ENCODE measurements at regions of chr18 and their contacts with region 1.

Region 1: DNA sequence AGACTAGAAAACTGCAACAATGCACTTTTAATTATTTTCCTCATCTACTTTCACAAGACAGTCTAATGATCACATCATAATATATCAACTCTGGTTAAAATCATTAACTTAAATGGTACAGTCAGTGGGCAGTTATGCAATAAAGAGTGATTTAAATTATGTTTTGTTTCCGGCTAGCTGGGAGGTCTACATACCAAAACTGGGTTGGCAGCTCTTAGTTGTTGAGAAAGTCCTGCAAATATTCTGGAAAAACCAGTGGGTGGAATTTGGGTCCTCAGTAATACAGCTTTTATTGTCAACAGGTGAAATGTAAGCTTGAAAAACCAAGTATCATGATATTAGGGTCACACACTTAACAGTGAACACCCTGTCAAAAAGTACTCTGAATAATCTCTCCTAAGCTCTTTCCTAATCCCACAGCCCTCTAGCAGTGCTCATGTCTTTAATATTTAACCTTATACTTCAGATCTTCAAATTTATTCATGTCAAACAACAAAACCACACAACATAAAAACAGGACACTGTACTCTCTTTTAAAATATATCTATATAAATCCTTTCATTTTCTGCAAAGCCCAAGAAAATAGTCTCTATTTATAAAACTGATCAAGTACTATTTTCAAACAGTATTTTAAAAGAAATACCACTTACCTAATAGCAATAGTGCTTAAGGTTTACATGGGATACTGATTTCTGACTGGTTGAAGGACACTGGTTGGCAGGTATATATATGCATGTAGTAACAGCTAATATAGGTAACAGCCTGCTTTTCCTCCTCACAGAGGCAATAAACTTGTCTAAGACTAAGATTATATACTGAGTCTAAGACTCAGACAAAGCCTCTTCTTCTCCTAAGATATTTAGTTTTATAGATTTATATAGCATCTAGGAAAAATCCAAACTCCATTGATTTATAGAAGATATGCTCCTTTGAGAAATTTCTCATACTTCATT is 103.8 kb downstream of the GAREM1 start:
- DNase-seq: no peak
- ATAC-seq: peak; percentile 52 to 79 (median 64)
- H3K4me3 ChIP-seq: no peak overlapping the region
- H3K27ac ChIP-seq: peak overlapping the region; percentile 41 to 92 (median 72)
- H3K4me1 ChIP-seq: peaks cover 46 to 64% (median 50%) of the 10 kb centered on the region in 3 donors
- H3K27me3 ChIP-seq: no peaks in the 10 kb centered on the region
- CTCF ChIP-seq: no peak

Region 2: GRCh38 chr18:32301976-32302743 is 64.7 kb before region 1 on chr18:
- intact Hi-C with region 1: loop called in 1 of 3 experiments (anchors 10 kb)
- DNase-seq: no peak
- ATAC-seq: peak; percentile 59 to 92 (median 86)
- H3K4me3 ChIP-seq: no peak overlapping the region
- H3K27ac ChIP-seq: peak overlapping the region in 2 of 4 donors; percentile 13 to 42
- H3K4me1 ChIP-seq: peaks cover 4 to 12% (median 10%) of the 10 kb centered on the region in 3 donors
- H3K27me3 ChIP-seq: no peaks in the 10 kb centered on the region
- CTCF ChIP-seq: no peak

Measured in pancreas (tissue), 10 donors.